ENCODE measurements at regions of chr1 and their contacts with region 1.

Region 1: GRCh38 chr1:84433258-84434080 is 35.2 kb downstream of the DNASE2B start:
- DNase-seq: peak; percentile 58
- H3K4me3 ChIP-seq: no peak overlapping the region; the same call in 1 of the 2 replicates
- H3K27ac ChIP-seq: no peak overlapping the region
- H3K27me3 ChIP-seq: no peaks in the 10 kb centered on the region
- CTCF ChIP-seq: peak; percentile 79

Region 2: GRCh38 chr1:83905315-83905907 is 528.1 kb before region 1 on chr1:
- CTCF ChIA-PET with region 1: interaction called, 26 read pairs
- POLR2A ChIA-PET with region 1: no interaction called
- DNase-seq: no peak
- H3K4me3 ChIP-seq: no peak overlapping the region
- H3K27ac ChIP-seq: no peak overlapping the region
- H3K27me3 ChIP-seq: no peaks in the 10 kb centered on the region
- CTCF ChIP-seq: peak; percentile 75

Region 3: DNA sequence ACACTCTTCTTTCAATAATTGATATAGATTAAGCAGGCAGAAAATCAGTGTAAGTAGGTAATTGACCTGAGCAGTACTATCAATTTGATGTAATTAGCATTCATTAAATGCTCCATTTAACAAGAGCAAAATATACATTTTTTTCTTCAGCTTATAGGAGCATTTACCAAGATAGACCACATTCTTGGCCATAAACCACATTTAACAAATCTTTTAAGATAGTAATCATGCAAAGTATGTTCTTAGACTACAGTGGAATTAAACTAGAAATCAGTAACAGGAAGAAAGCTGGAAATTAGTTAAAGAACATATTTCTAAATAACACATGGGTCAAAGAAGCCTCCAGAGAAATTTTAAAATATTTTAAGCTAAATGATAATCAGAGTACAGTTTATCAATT is 298.1 kb before region 1 on chr1:
- CTCF ChIA-PET with region 1: interaction called, 226 read pairs
- POLR2A ChIA-PET with region 1: no interaction called
- DNase-seq: no peak
- H3K4me3 ChIP-seq: no peak overlapping the region
- H3K27ac ChIP-seq: no peak overlapping the region
- H3K27me3 ChIP-seq: no peaks in the 10 kb centered on the region
- CTCF ChIP-seq: no peak

Region 4: GRCh38 chr1:84143796-84144565 is 289.5 kb before region 1 on chr1 and contains the start of gene PRKACB:
- CTCF ChIA-PET with region 1: interaction called, 226 read pairs
- POLR2A ChIA-PET with region 1: interaction called, 3 read pairs
- DNase-seq: no peak
- H3K4me3 ChIP-seq: no peak within 1 kb of the TSS
- H3K27ac ChIP-seq: no peak within 1 kb of the TSS
- H3K27me3 ChIP-seq: no peaks in the 10 kb centered on the region
- CTCF ChIP-seq: no peak
- polyA plus RNA-seq, gene PRKACB: 25.2 and 33.4 TPM in 2 replicates

Region 5: GRCh38 chr1:84301004-84301784 is 132.3 kb before region 1 on chr1 and contains the start of gene SAMD13:
- CTCF ChIA-PET with region 1: interaction called, 19 read pairs
- POLR2A ChIA-PET with region 1: no interaction called
- DNase-seq: peak; percentile 29
- H3K4me3 ChIP-seq: peak within 1 kb of the TSS; percentile 7
- H3K27ac ChIP-seq: no peak within 1 kb of the TSS
- H3K27me3 ChIP-seq: no peaks in the 10 kb centered on the region
- CTCF ChIP-seq: no peak
- polyA plus RNA-seq, gene SAMD13: 0.99 and 1.0 TPM in 2 replicates

Region 6: GRCh38 chr1:84478876-84479868 is 45.7 kb after region 1 on chr1 and contains the start of gene RPF1:
- CTCF ChIA-PET with region 1: interaction called, 10 read pairs
- POLR2A ChIA-PET with region 1: no interaction called
- DNase-seq: peak; percentile 39
- H3K4me3 ChIP-seq: peak within 1 kb of the TSS; percentile 88
- H3K27ac ChIP-seq: peak within 1 kb of the TSS; percentile 88
- H3K27me3 ChIP-seq: no peaks in the 10 kb centered on the region
- CTCF ChIP-seq: no peak
- polyA plus RNA-seq, gene RPF1: 36.4 and 46.5 TPM in 2 replicates

Region 7: GRCh38 chr1:84539972-84540371 is 106.5 kb after region 1 on chr1:
- CTCF ChIA-PET with region 1: no interaction called
- POLR2A ChIA-PET with region 1: no interaction called
- DNase-seq: no peak
- H3K4me3 ChIP-seq: no peak overlapping the region
- H3K27ac ChIP-seq: no peak overlapping the region
- H3K27me3 ChIP-seq: no peaks in the 10 kb centered on the region
- CTCF ChIP-seq: no peak